A673 (cell line): ENCODE measurements at regions of chr12 and their contacts with region 1.

Region 1: DNA sequence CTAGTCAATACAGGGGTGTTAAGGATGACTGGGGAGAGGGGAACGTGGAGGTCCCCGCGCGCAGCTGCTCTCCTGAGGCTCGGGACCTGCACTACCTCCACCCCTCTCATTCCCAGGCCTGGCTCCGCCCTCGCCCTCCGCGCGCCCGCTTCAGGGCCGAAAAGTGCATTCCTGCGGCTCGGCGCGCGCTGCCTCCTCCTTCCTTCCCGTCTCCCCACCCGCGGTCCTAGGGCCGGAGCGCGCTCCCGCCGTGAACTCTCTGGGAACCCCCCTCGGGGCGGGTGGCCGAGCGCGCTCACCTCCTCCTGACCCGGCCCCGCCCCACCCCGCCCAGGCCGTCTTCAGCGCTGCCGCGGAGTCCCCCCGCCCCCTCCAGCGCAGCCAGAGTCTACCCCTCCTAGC is 11.2 kb downstream of the RARG start:
- DNase-seq: peak; percentile 88
- H3K4me3 ChIP-seq: peak overlapping the region; percentile 64
- H3K27ac ChIP-seq: peak overlapping the region; percentile 75
- H3K4me1 ChIP-seq: peaks cover 70% of the 10 kb centered on the region
- H3K27me3 ChIP-seq: no peaks in the 10 kb centered on the region
- CTCF ChIP-seq: no peak

Region 2: GRCh38 chr12:53267999-53268647 is 47.3 kb after region 1 on chr12 and contains the start of gene ESPL1:
- CTCF ChIA-PET with region 1: interaction called, 8 read pairs
- POLR2A ChIA-PET with region 1: no interaction called
- intact Hi-C with region 1: loop called (anchors 5 kb)
- DNase-seq: peak; percentile 89
- H3K4me3 ChIP-seq: peak within 1 kb of the TSS; percentile 86
- H3K27ac ChIP-seq: peak within 1 kb of the TSS; percentile 87
- H3K4me1 ChIP-seq: peaks cover 18% of the 10 kb centered on the region
- H3K27me3 ChIP-seq: no peaks in the 10 kb centered on the region
- CTCF ChIP-seq: peak; percentile 47
- total RNA-seq, gene ESPL1: 99.1 and 105 TPM in 2 replicates

Region 3: DNA sequence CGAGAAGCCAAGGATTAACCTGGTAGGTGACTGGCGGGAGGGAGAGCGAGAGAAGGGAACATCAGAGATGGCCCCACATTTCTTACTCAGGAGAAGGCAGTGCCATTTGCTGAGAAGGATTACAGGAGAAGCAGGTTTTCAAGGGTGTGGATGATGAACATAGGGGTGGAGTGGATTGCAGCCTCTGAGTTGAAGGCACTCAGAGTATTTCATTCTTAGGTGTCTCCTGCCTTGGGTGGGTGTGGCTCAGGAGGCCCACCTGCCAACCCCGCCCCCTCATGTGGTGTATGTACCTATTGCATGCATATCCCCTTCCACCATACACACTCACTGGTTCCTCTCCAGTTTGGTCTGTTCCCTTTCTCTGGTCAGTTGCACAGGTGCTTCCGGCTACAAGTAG is 53.6 kb after region 1 on chr12:
- CTCF ChIA-PET with region 1: interaction called, 15 read pairs
- POLR2A ChIA-PET with region 1: interaction called, 3 read pairs
- intact Hi-C with region 1: loop called (anchors 5 kb)
- DNase-seq: no peak
- H3K4me3 ChIP-seq: no peak overlapping the region
- H3K27ac ChIP-seq: no peak overlapping the region
- H3K4me1 ChIP-seq: peaks cover 10% of the 10 kb centered on the region
- H3K27me3 ChIP-seq: no peaks in the 10 kb centered on the region
- CTCF ChIP-seq: no peak

Region 4: DNA sequence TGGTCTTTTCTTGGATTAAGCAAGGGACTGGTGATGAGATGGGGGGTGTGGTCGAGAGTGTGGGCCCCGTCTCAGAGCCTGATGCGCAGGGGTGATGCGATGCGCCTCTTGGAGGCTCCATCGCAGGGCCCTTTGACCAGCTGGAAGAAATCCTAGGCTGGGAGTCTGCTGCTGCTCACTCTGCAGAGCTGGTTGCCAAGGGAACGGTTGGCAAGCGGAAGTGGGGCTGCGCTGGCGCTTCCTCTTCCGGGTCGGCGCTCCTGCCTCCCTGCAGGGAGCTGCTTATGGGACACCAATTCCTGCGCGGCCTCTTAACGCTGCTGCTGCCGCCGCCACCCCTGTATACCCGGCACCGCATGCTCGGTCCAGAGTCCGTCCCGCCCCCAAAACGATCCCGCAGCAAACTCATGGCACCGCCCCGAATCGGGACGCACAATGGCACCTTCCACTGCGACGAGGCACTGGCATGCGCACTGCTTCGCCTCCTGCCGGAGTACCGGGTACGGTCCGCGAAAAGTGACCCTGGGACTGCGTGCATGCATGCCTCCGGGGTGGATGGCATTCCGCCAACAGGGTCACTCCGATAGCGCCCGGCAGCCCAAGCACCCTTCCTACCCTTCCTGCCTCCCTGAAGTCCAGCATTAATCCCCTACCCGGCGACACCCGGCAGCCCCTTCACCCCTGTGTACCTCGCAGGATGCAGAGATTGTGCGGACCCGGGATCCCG is 78.8 kb after region 1 on chr12 and contains the start of gene MYG1:
- CTCF ChIA-PET with region 1: no interaction called
- POLR2A ChIA-PET with region 1: interaction called, 17 read pairs
- intact Hi-C with region 1: no loop called
- DNase-seq: peak; percentile 97
- H3K4me3 ChIP-seq: peak within 1 kb of the TSS; percentile 73
- H3K27ac ChIP-seq: peak within 1 kb of the TSS; percentile 78
- H3K4me1 ChIP-seq: peaks cover 13% of the 10 kb centered on the region
- H3K27me3 ChIP-seq: no peaks in the 10 kb centered on the region
- CTCF ChIP-seq: 0 out of 2 replicates have a peak, but pooled peaks have one; percentile 24
- total RNA-seq, gene MYG1: 102 and 111 TPM in 2 replicates